Activated CD4-positive, alpha-beta memory T cell treated with anti-CD3 and anti-CD28 coated beads for 36 hours (primary cell): ENCODE measurements at regions of chr4 and their contacts with region 1.

Region 1: GRCh38 chr4:78517050-78517652 is 34.4 kb upstream of the ANXA3 start:
- DNase-seq: no peak
- H3K4me3 Mint-ChIP-seq: no peak overlapping the region
- H3K27ac Mint-ChIP-seq: no peak overlapping the region
- H3K4me1 Mint-ChIP-seq: no peaks in the 10 kb centered on the region
- H3K27me3 Mint-ChIP-seq: peaks cover 6% of the 10 kb centered on the region

Region 2: DNA sequence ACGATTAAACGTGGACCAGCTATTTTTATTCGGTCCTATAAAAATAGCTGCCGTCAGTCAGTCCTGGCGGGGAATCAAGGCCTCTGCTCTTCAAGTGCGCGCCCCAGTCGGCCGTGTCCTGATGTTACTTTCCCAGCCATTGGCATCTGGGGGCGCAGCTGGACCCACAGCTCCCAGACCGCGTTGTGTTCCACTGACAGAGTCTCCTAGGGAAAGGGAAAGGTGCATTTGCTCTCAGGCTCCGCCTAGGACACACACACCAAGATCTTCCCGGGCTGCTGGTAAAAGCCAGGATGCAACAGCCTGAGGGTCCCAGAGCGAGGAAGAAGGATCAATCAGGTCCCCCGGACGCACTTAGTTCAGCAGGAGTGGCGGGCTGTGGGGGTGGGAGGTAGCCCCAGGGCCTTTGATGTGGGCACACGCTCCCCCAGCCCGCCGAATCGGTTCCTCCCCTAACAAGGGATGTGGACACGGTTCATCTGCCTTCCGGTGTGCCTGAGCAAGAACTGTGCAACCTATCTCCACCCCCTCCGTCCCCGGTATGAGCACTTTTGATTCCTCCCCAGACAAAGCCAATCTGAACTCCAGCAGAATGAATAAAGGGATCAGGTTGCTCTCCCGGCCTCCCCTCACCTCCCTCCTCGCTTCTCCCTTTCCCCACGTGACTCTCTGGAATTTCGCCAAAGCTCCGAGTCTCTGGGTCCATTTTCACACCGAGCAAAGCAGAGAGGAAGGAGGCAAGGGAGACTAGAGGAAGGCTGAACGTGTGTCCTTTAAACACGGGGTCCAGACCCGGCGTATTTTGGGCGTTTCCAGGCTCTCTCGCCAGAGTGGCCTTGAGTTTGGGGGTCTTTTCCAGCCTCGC is 460.7 kb before region 1 on chr4:
- CTCF ChIA-PET with region 1: interaction called, 6 read pairs
- POLR2A ChIA-PET with region 1: no interaction called
- intact Hi-C with region 1: loop called (anchors 10 kb)
- DNase-seq: peak; percentile 52
- H3K4me3 Mint-ChIP-seq: peak overlapping the region; percentile 53
- H3K27ac Mint-ChIP-seq: no peak overlapping the region
- H3K4me1 Mint-ChIP-seq: peaks cover 19% of the 10 kb centered on the region
- H3K27me3 Mint-ChIP-seq: peaks cover 46% of the 10 kb centered on the region

Region 3: DNA sequence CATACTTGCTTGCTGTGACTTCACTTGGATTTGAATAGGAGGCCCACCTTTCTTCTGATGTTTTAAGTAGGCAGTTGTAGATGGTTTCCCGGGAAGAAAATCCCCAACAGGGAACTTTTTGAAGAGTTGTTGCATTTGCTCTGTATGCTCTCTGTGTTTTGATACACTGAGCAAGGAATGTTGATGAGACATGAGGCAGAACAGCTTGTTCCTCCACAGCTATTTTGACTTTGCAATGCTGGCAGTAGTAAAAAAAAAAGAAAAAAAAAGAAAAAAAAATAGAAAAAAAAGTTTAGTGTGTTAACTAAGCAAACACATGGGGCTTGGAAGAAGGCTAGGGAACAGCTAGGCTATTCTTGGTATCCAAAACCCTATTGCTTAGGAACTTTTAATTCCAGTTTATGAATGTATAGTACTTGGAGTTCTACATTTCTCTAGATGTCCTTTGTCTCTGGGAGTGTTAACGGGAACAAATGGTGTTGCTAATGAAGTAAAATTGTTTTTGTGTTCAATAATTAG is 445.5 kb after region 1 on chr4:
- CTCF ChIA-PET with region 1: no interaction called
- POLR2A ChIA-PET with region 1: no interaction called
- intact Hi-C with region 1: no loop called
- DNase-seq: no peak
- H3K4me3 Mint-ChIP-seq: no peak overlapping the region
- H3K27ac Mint-ChIP-seq: no peak overlapping the region
- H3K4me1 Mint-ChIP-seq: no peaks in the 10 kb centered on the region
- H3K27me3 Mint-ChIP-seq: peaks cover 6% of the 10 kb centered on the region